ENCODE measurements at regions of chr6 and their contacts with region 1.

Region 1: DNA sequence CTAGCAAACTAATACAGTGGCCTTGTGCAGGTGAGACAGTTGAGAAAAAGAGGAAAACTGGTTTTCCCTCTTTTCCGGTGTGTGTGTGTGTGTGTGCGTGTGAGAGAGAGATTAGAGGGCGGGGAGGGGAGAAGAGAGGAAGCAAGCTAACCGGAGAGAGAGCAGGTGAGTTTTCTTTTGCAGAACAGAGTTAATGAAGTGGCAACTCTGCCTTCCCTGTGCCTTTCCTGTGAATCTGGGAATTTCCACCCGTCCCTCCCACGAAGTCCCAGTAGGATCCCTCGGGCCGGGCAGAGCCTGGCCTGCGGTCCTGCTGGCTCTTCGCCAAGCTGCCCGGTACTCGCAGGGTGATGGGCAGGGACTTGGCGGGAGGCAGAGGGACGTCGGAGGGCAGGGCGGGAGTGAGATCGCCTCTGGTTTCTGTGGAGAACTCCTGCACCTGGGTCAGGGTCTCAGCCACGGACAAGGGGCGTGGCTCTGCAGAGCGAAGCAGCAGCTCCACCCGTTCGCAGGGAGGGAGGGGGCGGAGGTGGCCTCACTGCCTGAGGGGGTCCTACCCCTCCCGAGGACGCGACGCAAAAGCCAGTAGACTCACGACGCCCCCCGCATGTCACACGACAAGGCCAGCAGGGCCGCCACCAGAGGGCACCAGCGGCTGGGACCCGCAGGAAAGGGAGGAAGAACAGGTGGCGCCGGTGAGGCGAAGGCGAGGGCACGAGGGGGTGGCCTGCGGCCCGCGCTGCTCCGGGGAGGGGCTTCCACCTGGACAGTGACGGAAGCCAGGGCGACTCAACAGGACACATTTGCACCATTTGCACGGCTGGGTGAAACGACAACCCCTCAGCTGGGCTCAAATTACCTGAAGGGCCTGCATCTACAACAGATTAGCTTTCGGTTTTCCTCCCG is 51.2 kb upstream of the RNF182 start:
- DNase-seq: peak; percentile 52 to 64
- ATAC-seq: peak; percentile 38 to 79 (median 70)
- H3K4me3 ChIP-seq: peak overlapping the region in 9 of 10 donors; percentile 34 to 64 (median 54)
- H3K27ac ChIP-seq: no peak overlapping the region
- H3K4me1 ChIP-seq: peaks cover 7 to 16% (median 10%) of the 10 kb centered on the region in 9 donors
- H3K27me3 ChIP-seq: peaks cover 0 to 2% (median 0%) of the 10 kb centered on the region in 7 donors
- CTCF ChIP-seq: peak; percentile 25 to 79 (median 65)

Region 2: DNA sequence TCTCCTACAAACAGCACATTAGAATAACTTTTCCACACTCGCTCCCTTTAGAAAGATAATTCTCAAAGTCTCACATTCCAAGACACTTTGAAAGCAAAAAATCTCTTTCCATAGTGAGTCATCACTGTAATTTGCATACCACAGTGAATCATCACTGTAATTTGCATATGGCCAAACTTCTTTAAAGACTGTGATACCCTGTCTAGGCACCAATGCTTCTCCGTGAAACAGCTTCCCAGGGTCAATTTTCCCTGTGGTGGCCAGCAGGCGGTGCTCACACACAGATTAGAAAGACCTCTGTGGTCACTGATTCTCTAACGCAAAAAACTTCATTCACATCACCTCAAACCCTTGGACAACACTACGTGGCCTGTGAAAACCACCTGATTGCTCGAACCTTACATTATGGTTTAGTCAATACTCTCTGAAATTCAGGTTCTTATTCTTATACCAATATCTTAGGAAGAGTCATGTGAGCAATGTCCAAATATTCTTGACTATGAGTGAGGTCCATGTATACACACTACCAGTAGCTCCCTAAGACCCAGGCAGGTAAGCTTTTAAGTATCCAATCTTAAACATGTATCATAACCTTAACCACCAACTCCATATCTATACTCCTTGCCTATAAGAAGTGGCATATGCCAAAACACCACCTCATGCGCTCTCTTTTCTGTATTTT is 1235.4 kb before region 1 on chr6:
- intact Hi-C with region 1: no loop called
- DNase-seq: peak; percentile 14 to 31
- ATAC-seq: peak in 5 of 8 donors; percentile 35 to 60 (median 56)
- H3K4me3 ChIP-seq: no peak overlapping the region
- H3K27ac ChIP-seq: no peak overlapping the region
- H3K4me1 ChIP-seq: peaks cover 0 to 4% (median 0%) of the 10 kb centered on the region in 9 donors
- H3K27me3 ChIP-seq: peaks cover 0 to 9% (median 0%) of the 10 kb centered on the region in 7 donors
- CTCF ChIP-seq: peak in 8 of 9 donors; percentile 20 to 77 (median 62)

Region 3: GRCh38 chr6:13814176-13814937 is 59.2 kb before region 1 on chr6 and contains the start of gene MCUR1:
- intact Hi-C with region 1: loop called in 1 of 10 experiments (anchors 5 kb)
- DNase-seq: peak; percentile 87
- ATAC-seq: peak; percentile 93 to 98 (median 96)
- H3K4me3 ChIP-seq: peak within 1 kb of the TSS; percentile 62 to 98 (median 88)
- H3K27ac ChIP-seq: peak within 1 kb of the TSS; percentile 79 to 99 (median 96)
- H3K4me1 ChIP-seq: peaks cover 0 to 43% (median 38%) of the 10 kb centered on the region in 9 donors
- H3K27me3 ChIP-seq: no peaks in the 10 kb centered on the region
- CTCF ChIP-seq: peak in 5 of 9 donors; percentile 13 to 54 (median 48)
- total RNA-seq, gene MCUR1: 25.2 to 40.8 (median 32.7) TPM

Region 4: DNA sequence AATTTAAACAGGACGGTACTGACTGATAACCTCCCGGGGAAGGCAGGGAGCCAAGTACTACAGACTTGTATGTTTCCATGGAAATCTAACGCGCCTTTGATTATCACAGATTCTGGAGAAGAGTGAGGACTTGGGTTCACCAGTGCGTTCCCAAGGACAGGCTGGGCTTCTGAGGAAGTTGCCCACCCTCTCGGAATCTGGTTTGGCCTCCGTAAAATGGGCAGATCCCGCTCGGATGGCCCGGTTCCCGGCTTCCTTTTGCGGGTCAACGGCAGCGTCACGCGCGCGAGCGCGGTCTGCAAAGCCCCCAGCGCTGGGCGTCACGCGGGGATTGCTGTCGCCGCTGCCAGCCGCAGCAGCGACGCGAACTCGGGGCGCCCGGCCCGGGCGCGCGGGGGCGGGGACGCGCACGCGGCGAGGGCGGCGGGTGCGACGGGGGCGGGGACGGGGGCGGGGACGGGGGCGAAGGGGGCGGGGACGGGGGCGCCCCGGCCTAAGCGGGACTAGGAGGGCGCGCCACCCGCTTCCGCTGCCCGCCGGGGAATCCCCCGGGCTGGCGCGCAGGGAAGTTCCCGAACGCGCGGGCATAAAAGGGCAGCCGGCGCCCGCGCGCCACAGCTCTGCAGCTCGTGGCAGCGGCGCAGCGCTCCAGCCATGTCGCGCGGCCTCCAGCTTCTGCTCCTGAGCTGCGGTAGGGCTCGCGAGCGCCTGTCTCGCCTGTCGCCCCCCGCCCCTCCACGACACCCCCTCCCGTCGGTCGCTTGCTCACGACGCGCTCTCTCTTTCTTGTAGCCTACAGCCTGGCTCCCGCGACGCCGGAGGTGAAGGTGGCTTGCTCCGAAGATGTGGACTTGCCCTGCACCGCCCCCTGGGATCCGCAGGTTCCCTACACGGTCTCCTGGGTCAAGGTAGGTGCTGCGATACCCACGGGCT is 243.9 kb after region 1 on chr6 and contains the start of gene CD83:
- intact Hi-C with region 1: no loop called
- DNase-seq: peak; percentile 34 to 70
- ATAC-seq: peak; percentile 82 to 95 (median 86)
- H3K4me3 ChIP-seq: peak within 1 kb of the TSS; percentile 30 to 80 (median 68)
- H3K27ac ChIP-seq: peak within 1 kb of the TSS in 7 of 10 donors; percentile 50 to 78 (median 64)
- H3K4me1 ChIP-seq: peaks cover 0 to 33% (median 4%) of the 10 kb centered on the region in 9 donors
- H3K27me3 ChIP-seq: no peaks in the 10 kb centered on the region
- CTCF ChIP-seq: peak in 1 of 9 donors; percentile 17
- total RNA-seq, gene CD83: 0.82 to 7.5 (median 2.0) TPM

Region 5: GRCh38 chr6:14333556-14334305 is 460.2 kb after region 1 on chr6:
- intact Hi-C with region 1: no loop called
- DNase-seq: no peak
- ATAC-seq: no peak
- H3K4me3 ChIP-seq: no peak overlapping the region
- H3K27ac ChIP-seq: no peak overlapping the region
- H3K4me1 ChIP-seq: peaks cover 0 to 8% (median 0%) of the 10 kb centered on the region in 9 donors
- H3K27me3 ChIP-seq: no peaks in the 10 kb centered on the region
- CTCF ChIP-seq: no peak